Activated CD4-positive, alpha-beta T cell treated with anti-CD3 and anti-CD28 coated beads for 36 hours (primary cell): ENCODE measurements at regions of chr5 and their contacts with region 1.

Region 1: DNA sequence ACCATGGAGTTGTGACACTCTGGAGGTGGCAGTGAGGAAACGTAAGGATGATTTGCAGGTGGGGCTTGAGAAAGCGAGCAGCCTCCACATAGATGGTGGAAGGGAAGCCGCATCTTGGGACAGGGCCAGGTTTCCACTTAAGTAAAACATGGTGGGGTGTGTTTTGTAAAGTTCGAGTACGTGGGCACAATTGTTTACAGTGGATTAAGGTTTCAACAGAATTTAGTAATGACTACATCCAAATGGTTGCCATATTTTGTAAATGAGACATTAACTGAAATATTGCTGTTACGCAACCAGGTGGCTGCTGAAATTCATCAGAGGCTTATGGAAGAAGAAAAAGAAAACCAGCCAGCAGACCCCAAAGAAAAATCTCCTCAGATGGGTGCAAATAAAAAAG is 85.4 kb upstream of the IL7R start:
- DNase-seq: no peak
- ATAC-seq: no peak
- H3K4me3 Mint-ChIP-seq: no peak overlapping the region
- H3K27ac Mint-ChIP-seq: no peak overlapping the region
- H3K4me1 Mint-ChIP-seq: peaks cover 53% of the 10 kb centered on the region
- H3K27me3 Mint-ChIP-seq: no peaks in the 10 kb centered on the region

Region 2: GRCh38 chr5:35478856-35479682 is 292.2 kb before region 1 on chr5:
- CTCF ChIA-PET with region 1: no interaction called
- POLR2A ChIA-PET with region 1: no interaction called
- intact Hi-C with region 1: loop called in 1 of 2 experiments (anchors 5 kb)
- DNase-seq: no peak
- ATAC-seq: peak; percentile 89
- H3K4me3 Mint-ChIP-seq: peak overlapping the region; percentile 35
- H3K27ac Mint-ChIP-seq: peak overlapping the region; percentile 83
- H3K4me1 Mint-ChIP-seq: peaks cover 11% of the 10 kb centered on the region
- H3K27me3 Mint-ChIP-seq: peaks cover 2% of the 10 kb centered on the region

Region 3: GRCh38 chr5:35665096-35665495 is 106.2 kb before region 1 on chr5:
- CTCF ChIA-PET with region 1: interaction called, 5 read pairs
- POLR2A ChIA-PET with region 1: no interaction called
- intact Hi-C with region 1: loop called (anchors 2 to 5 kb)
- DNase-seq: no peak
- ATAC-seq: no peak
- H3K4me3 Mint-ChIP-seq: no peak overlapping the region
- H3K27ac Mint-ChIP-seq: peak overlapping the region; percentile 7
- H3K4me1 Mint-ChIP-seq: peaks cover 55% of the 10 kb centered on the region
- H3K27me3 Mint-ChIP-seq: no peaks in the 10 kb centered on the region

Region 4: GRCh38 chr5:35803191-35803651 is 31.9 kb after region 1 on chr5:
- CTCF ChIA-PET with region 1: no interaction called
- POLR2A ChIA-PET with region 1: no interaction called
- intact Hi-C with region 1: no loop called
- DNase-seq: no peak
- ATAC-seq: peak; percentile 24
- H3K4me3 Mint-ChIP-seq: peak overlapping the region; percentile 0
- H3K27ac Mint-ChIP-seq: peak overlapping the region; percentile 80
- H3K4me1 Mint-ChIP-seq: peaks cover 78% of the 10 kb centered on the region
- H3K27me3 Mint-ChIP-seq: no peaks in the 10 kb centered on the region